ENCODE measurements at regions of chr4 and their contacts with region 1.

Region 1: DNA sequence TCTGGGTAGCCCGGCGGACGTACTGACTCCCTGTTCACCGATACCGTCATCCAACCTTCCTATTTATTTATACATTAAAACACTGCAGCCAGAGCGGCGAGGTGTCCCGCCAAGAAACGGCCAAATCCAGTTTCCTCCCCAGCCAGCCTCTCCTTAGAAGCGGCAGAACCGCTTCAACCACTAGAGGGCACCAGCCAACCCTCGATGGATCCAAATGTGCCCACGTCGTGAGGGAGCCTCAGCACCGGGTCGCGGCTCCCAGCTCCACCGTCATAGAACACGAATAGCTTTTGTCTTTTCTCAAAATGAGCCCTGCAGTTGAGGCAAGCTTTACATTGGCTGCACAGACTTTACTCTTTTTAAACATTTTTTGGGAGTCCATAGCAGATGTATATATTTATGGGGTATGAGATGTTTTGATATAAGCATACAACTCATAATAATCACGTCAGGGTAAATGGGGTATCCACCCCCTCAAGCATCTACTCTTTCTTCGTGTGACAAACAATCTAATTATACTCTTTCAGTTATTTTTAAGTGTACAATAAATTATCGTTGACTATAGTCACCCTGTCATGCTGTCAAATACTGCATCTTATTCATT is 13.0 kb upstream of the HELT start:
- DNase-seq: peak; percentile 65
- ATAC-seq: peak; percentile 97
- H3K4me3 ChIP-seq: no peak overlapping the region
- H3K27ac ChIP-seq: no peak overlapping the region
- H3K4me1 ChIP-seq: no peaks in the 10 kb centered on the region
- H3K27me3 ChIP-seq: peaks cover 32% of the 10 kb centered on the region
- CTCF ChIP-seq: peak; percentile 82
- POLR2A ChIP-seq: no peak
- RAD21 ChIP-seq: peak; percentile 78

Region 2: GRCh38 chr4:184994010-184994622 is 11.2 kb before region 1 on chr4:
- CTCF ChIA-PET with region 1: no interaction called
- POLR2A ChIA-PET with region 1: no interaction called
- dilution Hi-C with region 1: no loop called
- in situ Hi-C with region 1: no loop called
- intact Hi-C with region 1: no loop called
- DNase-seq: no peak
- ATAC-seq: no peak
- H3K4me3 ChIP-seq: no peak overlapping the region
- H3K27ac ChIP-seq: no peak overlapping the region
- H3K4me1 ChIP-seq: no peaks in the 10 kb centered on the region
- H3K27me3 ChIP-seq: peaks cover 11% of the 10 kb centered on the region
- CTCF ChIP-seq: no peak
- POLR2A ChIP-seq: no peak
- RAD21 ChIP-seq: no peak

Region 3: DNA sequence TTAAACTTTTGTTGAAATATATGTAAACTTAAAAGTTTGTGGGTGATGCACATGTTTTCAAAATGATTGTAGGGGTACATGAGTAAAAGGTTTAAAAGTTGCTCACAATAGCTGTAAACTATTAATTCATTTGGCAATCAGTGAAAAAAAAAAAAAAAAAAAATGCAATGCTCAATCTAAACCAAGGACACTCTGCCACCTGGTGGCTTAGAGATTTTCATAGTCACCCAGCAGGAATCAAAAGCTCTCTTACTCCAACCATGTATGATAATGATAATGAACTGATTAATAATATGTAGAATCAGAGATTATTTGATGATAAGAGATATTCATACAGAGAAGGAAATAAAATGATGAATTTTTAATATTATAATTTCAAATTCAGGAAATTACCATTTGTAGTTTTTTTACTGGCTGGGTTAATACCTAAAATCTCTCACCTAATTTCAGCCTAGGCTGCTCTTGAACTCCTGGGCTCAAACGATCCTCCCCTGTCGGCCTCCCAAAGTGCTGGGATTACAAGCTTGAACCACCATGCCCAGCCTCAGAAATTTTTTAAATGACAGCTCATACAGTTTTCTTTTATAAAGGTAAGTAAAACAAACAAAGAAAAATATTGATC is 90.8 kb after region 1 on chr4:
- CTCF ChIA-PET with region 1: interaction called, 3 read pairs
- POLR2A ChIA-PET with region 1: no interaction called
- dilution Hi-C with region 1: no loop called
- in situ Hi-C with region 1: no loop called
- intact Hi-C with region 1: loop called (anchors 2 kb)
- DNase-seq: peak; percentile 31
- ATAC-seq: 0 out of 2 replicates have a peak, but pooled peaks have one; percentile 37
- H3K4me3 ChIP-seq: no peak overlapping the region
- H3K27ac ChIP-seq: no peak overlapping the region
- H3K4me1 ChIP-seq: no peaks in the 10 kb centered on the region
- H3K27me3 ChIP-seq: peaks cover 16% of the 10 kb centered on the region
- CTCF ChIP-seq: peak; percentile 64
- POLR2A ChIP-seq: no peak
- RAD21 ChIP-seq: peak; percentile 58

Region 4: GRCh38 chr4:185134307-185134869 is 129.1 kb after region 1 on chr4:
- CTCF ChIA-PET with region 1: interaction called, 10 read pairs
- POLR2A ChIA-PET with region 1: no interaction called
- dilution Hi-C with region 1: no loop called
- in situ Hi-C with region 1: loop called (anchors 10 kb)
- intact Hi-C with region 1: loop called (anchors 1 kb)
- DNase-seq: peak; percentile 61
- ATAC-seq: peak; percentile 87
- H3K4me3 ChIP-seq: no peak overlapping the region
- H3K27ac ChIP-seq: no peak overlapping the region
- H3K4me1 ChIP-seq: no peaks in the 10 kb centered on the region
- H3K27me3 ChIP-seq: peaks cover 2% of the 10 kb centered on the region; the same call in 1 of the 2 replicates
- CTCF ChIP-seq: peak; percentile 85
- POLR2A ChIP-seq: no peak
- RAD21 ChIP-seq: peak; percentile 84